Gastrocnemius medialis (tissue), 4 donors: ENCODE measurements at regions of chr5 and their contacts with region 1.

Region 1: GRCh38 chr5:91383027-91383955 is at the start of gene ARRDC3:
- DNase-seq: peak; percentile 93 to 96
- ATAC-seq: peak; percentile 48 to 70
- H3K4me3 ChIP-seq: peak within 1 kb of the TSS; percentile 67 to 96 (median 85)
- H3K27ac ChIP-seq: peak within 1 kb of the TSS; percentile 90 to 100 (median 94)
- H3K4me1 ChIP-seq: peaks cover 17 to 20% of the 10 kb centered on the region in 2 donors
- H3K27me3 ChIP-seq: no peaks in the 10 kb centered on the region
- CTCF ChIP-seq: peak in 1 of 5 experiments; percentile 24
- POLR2A ChIP-seq: peak; percentile 95 to 98
- total RNA-seq, gene ARRDC3: 64.1 to 116 (median 87.7) TPM

Region 2: DNA sequence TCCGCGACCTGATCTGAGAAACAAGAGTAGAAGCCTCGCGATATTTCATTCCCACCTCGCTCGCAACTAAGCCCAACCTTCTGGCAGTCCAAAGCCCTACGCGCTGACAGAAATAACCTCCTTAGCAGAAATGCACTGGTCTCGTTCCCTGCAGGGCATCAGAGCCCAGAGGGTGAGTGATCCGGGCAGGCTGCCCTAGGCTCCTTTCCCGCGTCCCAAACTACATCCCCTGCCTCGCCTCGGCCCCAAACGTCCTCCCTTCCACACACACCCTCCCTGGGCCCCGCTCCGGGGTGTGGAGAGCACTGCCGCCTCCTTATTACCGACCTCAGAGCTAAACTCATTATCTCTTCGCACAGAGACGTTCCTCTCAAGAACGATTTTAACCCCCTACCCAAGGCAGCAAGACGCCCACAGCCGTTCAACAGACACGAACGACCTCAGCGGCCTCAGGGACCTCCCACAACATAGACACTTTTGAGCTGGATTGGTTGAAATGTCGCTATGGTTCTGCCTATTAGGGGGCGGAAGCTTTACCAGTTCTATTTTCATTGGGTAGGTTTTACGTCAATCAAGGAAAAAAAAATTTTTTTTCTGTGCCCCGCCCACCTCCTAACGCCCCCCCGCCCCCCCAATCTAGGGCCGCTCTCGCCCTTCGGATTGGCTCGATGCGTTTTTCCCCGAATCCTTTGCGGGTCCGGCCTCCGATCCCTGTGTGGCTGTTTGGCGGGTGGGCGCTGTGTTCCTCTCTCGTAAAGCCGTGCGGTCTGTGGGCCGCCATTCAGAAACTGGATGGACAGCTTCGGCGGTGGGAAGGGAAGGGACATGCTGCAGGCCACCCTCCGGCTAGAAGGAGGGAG is 973.7 kb before region 1 on chr5 and contains the start of gene CETN3:
- in situ Hi-C with region 1: loop called in 1 of 4 experiments (anchors 25 kb)
- intact Hi-C with region 1: no loop called
- DNase-seq: peak; percentile 92 to 93
- ATAC-seq: peak; percentile 99
- H3K4me3 ChIP-seq: peak within 1 kb of the TSS; percentile 76 to 97 (median 86)
- H3K27ac ChIP-seq: peak within 1 kb of the TSS; percentile 92 to 97 (median 94)
- H3K4me1 ChIP-seq: peaks cover 12 to 14% of the 10 kb centered on the region in 2 donors
- H3K27me3 ChIP-seq: no peaks in the 10 kb centered on the region
- CTCF ChIP-seq: peak in 1 of 5 experiments; percentile 12
- POLR2A ChIP-seq: peak; percentile 62 to 89
- total RNA-seq, gene CETN3: 1.4 to 4.9 (median 3.2) TPM

Region 3: DNA sequence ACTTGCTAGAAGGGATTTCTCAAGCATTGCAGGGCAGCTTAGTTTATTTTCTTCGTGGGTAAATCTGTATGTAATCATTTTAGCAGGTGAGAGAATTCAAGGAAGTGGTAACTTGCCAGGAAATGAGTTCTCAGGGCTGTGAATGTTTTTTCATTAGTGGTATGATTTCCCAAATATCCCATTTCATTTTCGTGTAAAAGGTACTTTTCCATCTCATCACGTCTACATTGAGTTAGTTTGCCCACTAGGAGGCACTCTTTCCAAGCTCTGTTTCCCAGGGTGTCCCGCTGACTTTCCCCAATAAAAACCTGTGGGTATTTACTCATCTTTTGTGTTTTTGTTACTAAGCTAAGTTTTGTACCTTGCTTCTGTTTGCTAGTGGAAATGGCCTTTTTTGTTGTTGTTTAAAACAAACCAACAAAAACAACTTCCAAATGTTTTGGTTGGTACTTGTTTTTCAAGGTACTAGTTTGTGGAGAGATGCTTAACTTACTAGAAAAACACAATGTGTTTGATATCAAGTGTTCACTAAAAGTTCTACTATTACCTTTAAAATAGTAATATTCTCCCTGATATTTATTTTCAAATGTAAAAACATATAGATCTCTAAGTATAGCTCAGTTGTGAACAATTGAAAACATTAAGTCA is 451.1 kb before region 1 on chr5:
- in situ Hi-C with region 1: loop called in 2 of 4 experiments (anchors 10 kb)
- intact Hi-C with region 1: loop called (anchors 1 kb)
- DNase-seq: peak in 1 of 2 donors; percentile 11
- ATAC-seq: peak; percentile 75 to 80
- H3K4me3 ChIP-seq: no peak overlapping the region
- H3K27ac ChIP-seq: peak overlapping the region in 1 of 4 donors; percentile 5
- H3K4me1 ChIP-seq: no peaks in the 10 kb centered on the region
- H3K27me3 ChIP-seq: no peaks in the 10 kb centered on the region
- CTCF ChIP-seq: peak; percentile 66 to 82 (median 73)
- POLR2A ChIP-seq: no peak

Region 4: DNA sequence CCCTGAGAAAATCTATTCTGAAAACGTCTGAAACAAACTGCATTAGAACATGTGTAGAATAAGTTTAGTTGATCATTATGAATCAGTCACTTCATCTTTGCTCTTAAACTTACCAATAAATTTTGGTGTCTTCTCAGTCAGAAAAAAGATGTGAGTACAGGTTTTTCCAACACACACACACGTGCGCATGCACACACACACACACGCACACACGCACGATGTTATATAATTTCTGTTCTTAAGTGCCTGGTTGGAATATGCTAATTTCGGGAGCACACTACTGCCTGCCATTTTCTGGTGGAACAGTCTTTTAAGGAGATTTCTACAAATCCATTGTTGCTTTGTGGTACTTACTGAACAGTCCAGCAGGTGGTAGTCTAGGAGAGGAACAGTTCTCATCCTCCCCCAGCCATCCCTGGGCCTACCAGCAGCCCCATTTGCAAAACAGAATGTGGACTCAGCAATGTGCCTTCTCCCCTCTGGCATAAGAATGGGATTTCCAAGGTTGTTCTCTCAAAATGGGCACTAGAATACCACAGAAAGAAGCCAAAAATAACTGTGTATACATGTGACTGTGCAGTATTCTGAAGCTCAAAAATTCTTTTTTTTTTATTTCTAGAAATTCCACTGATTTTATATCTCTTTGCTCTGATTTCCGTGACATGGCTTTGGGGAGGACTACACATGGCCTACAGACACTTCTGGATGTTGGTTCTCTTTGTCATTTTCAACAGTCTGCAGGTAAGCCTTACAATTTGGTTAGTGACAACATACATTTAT is 281.5 kb before region 1 on chr5:
- in situ Hi-C with region 1: loop called (anchors 5 kb)
- intact Hi-C with region 1: loop called (anchors 1 kb)
- DNase-seq: peak; percentile 46 to 61
- ATAC-seq: peak; percentile 93 to 95
- H3K4me3 ChIP-seq: no peak overlapping the region
- H3K27ac ChIP-seq: no peak overlapping the region
- H3K4me1 ChIP-seq: peaks cover 0 to 9% of the 10 kb centered on the region in 2 donors
- H3K27me3 ChIP-seq: no peaks in the 10 kb centered on the region
- CTCF ChIP-seq: peak; percentile 79 to 91 (median 81)
- POLR2A ChIP-seq: no peak

Region 5: GRCh38 chr5:91212714-91213092 is 170.6 kb before region 1 on chr5:
- in situ Hi-C with region 1: loop called in 1 of 4 experiments (anchors 5 kb)
- intact Hi-C with region 1: no loop called
- DNase-seq: no peak
- ATAC-seq: peak; percentile 32 to 35
- H3K4me3 ChIP-seq: no peak overlapping the region
- H3K27ac ChIP-seq: peak overlapping the region in 2 of 4 donors; percentile 7 to 44
- H3K4me1 ChIP-seq: peaks cover 8 to 23% of the 10 kb centered on the region in 2 donors
- H3K27me3 ChIP-seq: no peaks in the 10 kb centered on the region
- CTCF ChIP-seq: no peak
- POLR2A ChIP-seq: no peak

Region 6: DNA sequence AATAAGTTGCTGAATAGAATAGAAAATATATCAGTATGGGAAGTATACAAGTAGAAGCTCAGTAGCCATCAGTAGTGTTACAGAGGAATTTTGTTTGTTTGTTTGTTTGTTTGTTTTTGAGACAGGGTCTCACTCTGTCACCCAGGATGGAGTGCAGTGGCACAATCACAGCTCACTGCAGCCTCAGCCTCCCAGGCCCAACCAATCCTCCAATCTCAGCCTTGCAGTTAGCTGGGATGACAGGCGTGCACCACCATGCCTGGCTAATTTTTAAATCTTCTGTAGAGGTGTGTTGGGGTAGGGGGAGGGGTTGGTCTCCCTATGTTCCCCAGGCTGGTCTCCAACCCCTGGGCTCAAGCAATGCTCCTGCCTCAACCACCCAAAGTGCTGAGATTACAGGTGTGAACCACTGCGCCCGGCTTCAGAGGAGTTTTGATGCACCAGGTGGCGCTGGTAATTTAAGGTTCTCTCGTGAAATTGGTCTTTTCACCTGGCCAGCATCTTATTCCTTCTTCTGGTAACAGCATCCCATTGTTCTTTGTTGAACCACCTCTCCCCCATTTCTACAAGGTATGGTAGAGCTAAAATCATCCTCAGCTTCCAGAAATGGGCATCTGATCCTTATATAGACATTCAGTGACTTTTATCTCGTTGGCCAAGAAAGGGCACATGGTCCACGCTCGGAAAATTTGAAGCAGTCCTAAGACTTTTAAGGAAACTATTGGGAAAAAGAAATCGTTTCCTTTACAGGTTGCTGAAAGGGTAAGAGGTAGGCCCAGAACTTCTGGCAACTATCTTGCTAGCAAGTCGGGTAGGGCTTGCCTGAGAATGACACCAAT is 157.2 kb before region 1 on chr5:
- in situ Hi-C with region 1: loop called in 3 of 4 experiments (anchors 5 to 10 kb)
- intact Hi-C with region 1: loop called (anchors 1 kb)
- DNase-seq: no peak
- ATAC-seq: peak; percentile 73 to 77
- H3K4me3 ChIP-seq: no peak overlapping the region
- H3K27ac ChIP-seq: no peak overlapping the region
- H3K4me1 ChIP-seq: no peaks in the 10 kb centered on the region
- H3K27me3 ChIP-seq: no peaks in the 10 kb centered on the region
- CTCF ChIP-seq: peak; percentile 26 to 51 (median 50)
- POLR2A ChIP-seq: no peak

Region 7: GRCh38 chr5:91311697-91312501 is 71.4 kb before region 1 on chr5:
- in situ Hi-C with region 1: loop called in 1 of 4 experiments (anchors 10 kb)
- intact Hi-C with region 1: loop called (anchors 1 kb)
- DNase-seq: peak; percentile 88 to 96
- ATAC-seq: peak; percentile 57 to 61
- H3K4me3 ChIP-seq: peak overlapping the region; percentile 26 to 42 (median 29)
- H3K27ac ChIP-seq: peak overlapping the region; percentile 85 to 94 (median 90)
- H3K4me1 ChIP-seq: peaks cover 27 to 52% of the 10 kb centered on the region in 2 donors
- H3K27me3 ChIP-seq: no peaks in the 10 kb centered on the region
- CTCF ChIP-seq: peak in 2 of 5 experiments; percentile 10 to 17
- POLR2A ChIP-seq: peak in 1 of 2 donors; percentile 43